AG04450 (cell line): ENCODE measurements at regions of chr2 and their contacts with region 1.

Region 1: DNA sequence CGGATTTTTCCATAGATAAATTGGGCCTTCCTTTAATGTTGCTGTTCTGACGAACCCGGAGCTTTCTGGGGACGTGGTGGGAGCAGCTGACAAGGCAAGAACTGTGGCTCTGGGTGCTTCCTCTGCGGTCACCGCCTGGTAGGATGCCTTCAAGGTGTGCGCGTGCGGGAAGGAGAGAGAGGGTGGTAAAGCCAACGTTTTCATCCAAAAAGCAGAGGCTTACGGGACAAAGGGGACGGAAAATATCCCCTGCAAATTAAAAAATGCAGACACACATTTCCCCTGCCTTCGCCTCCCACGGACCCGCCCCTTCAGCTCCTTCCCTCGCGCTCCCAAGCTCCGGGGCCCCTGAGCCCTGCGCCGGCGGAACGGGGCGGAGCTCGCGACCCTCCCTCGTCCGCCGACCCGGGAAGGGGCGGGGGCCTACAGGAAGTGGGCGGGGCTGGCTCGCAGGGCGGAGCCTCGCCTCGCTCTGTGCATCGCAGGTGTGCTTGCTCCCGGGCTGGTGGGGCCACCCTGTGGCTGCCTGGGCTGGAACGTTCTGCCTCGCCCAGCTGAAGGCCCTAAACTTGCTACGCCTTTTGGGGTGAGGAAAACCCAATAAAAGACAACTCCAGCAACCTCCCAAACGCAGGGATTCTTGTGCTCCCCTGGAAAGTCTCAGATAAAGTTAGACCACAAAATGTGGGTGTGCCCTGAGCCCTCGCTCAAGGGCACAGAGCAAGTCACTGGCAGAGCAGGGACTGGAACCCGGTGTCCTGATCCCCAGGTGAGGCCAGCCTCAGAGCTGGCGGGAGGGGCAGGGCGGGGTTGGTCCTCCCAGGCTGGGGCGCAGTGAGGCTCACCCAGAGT is 25.4 kb upstream of the SLC66A3 start:
- DNase-seq: no peak
- H3K4me3 ChIP-seq: peak overlapping the region; percentile 39
- H3K27ac ChIP-seq: no peak overlapping the region
- H3K27me3 ChIP-seq: no peaks in the 10 kb centered on the region
- CTCF ChIP-seq: peak; percentile 15; the same call in 1 of the 2 replicates

Region 2: DNA sequence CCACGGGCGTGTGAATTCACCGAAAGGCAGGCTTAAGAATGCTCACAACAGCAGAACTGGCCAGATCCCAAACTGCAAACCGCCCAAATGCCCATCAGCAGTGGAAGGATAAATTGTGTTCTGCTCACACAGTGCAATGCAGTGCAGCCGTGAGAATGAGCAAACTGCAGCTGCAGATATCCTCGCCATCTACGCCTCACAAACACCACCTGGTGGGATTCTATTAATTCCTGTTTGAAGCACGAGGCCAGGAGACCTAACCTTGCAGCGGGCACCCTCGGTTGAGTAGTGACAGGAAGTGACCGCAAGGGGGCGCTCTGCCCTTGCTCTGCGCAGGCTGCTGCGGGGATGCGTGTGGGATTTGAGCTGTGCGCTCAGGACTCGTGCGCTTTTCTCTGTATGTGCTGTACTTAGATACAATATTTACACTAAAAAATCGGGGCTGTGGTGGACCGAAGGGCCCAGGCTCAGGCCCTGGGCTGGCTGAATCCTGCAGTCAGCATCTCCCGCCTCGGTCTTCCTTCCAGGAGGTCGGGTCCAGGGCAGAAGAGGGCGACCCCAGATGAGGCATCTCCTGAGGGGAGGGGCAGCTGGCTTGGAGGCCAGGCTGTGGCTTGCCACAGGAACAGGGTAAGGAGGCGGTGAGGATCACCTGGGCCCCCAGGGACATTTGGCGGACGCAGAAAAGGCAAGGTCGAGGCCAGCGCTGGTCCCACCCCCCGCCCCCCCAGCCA is 297.5 kb before region 1 on chr2:
- CTCF ChIA-PET with region 1: interaction called, 360 read pairs
- POLR2A ChIA-PET with region 1: no interaction called
- DNase-seq: peak; percentile 63
- H3K4me3 ChIP-seq: no peak overlapping the region
- H3K27ac ChIP-seq: no peak overlapping the region
- H3K27me3 ChIP-seq: peaks cover 36% of the 10 kb centered on the region
- CTCF ChIP-seq: peak; percentile 98

Region 3: DNA sequence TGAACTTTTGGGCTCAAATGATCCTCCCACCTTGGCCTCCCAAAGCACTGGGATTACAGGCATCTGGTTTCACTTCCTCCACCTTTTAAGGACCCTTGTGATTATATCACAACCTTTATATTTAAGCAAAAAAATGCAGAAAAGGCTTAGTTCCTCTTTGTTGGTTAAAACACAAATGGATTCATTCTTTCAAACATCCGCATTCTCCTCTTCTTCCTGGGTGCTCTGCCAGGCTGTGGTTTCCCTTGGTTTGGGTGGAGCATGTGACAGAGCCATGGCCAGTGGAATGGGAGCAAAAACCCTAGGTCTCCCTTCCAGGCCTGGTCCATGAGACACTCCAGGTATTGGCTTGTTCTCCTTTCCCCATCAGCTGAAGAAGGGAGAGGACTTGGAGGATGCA is 15.5 kb after region 1 on chr2:
- CTCF ChIA-PET with region 1: interaction called, 27 read pairs
- POLR2A ChIA-PET with region 1: no interaction called
- DNase-seq: no peak
- H3K4me3 ChIP-seq: no peak overlapping the region
- H3K27ac ChIP-seq: no peak overlapping the region
- H3K27me3 ChIP-seq: peaks cover 4% of the 10 kb centered on the region
- CTCF ChIP-seq: no peak

Region 4: GRCh38 chr2:11214770-11215169 is 84.9 kb after region 1 on chr2:
- CTCF ChIA-PET with region 1: interaction called, 26 read pairs
- POLR2A ChIA-PET with region 1: no interaction called
- DNase-seq: no peak
- H3K4me3 ChIP-seq: no peak overlapping the region
- H3K27ac ChIP-seq: no peak overlapping the region
- H3K27me3 ChIP-seq: no peaks in the 10 kb centered on the region
- CTCF ChIP-seq: no peak

Region 5: GRCh38 chr2:11411768-11412448 is 282.1 kb after region 1 on chr2:
- CTCF ChIA-PET with region 1: interaction called, 49 read pairs
- POLR2A ChIA-PET with region 1: interaction called, 3 read pairs
- DNase-seq: no peak
- H3K4me3 ChIP-seq: peak overlapping the region; percentile 44
- H3K27ac ChIP-seq: no peak overlapping the region
- H3K27me3 ChIP-seq: no peaks in the 10 kb centered on the region
- CTCF ChIP-seq: peak; percentile 90

Region 6: GRCh38 chr2:11573418-11574175 is 443.8 kb after region 1 on chr2:
- CTCF ChIA-PET with region 1: interaction called, 10 read pairs
- POLR2A ChIA-PET with region 1: no interaction called
- DNase-seq: no peak
- H3K4me3 ChIP-seq: no peak overlapping the region
- H3K27ac ChIP-seq: peak overlapping the region; percentile 11
- H3K27me3 ChIP-seq: peaks cover 20% of the 10 kb centered on the region
- CTCF ChIP-seq: no peak

Region 7: GRCh38 chr2:11778923-11779757 is 649.3 kb after region 1 on chr2:
- CTCF ChIA-PET with region 1: interaction called, 14 read pairs
- POLR2A ChIA-PET with region 1: no interaction called
- DNase-seq: no peak
- H3K4me3 ChIP-seq: no peak overlapping the region
- H3K27ac ChIP-seq: no peak overlapping the region
- H3K27me3 ChIP-seq: no peaks in the 10 kb centered on the region
- CTCF ChIP-seq: peak; percentile 95